ENCODE measurements at regions of chr13 and their contacts with region 1.

Region 1: GRCh38 chr13:30465585-30466357 is at the start of gene HMGB1:
- DNase-seq: peak; percentile 99 to 100 (median 100)
- H3K4me3 ChIP-seq: peak within 1 kb of the TSS; percentile 50 to 94 (median 79)
- H3K27ac ChIP-seq: peak within 1 kb of the TSS; percentile 61 to 100 (median 98)
- H3K27me3 ChIP-seq: no peaks in the 10 kb centered on the region
- CTCF ChIP-seq: peak in 10 of 56 donors; percentile 8 to 34 (median 20)
- total RNA-seq, gene HMGB1: 153 to 327 (median 228) TPM

Region 2: GRCh38 chr13:29428310-29429181 is 1037.2 kb before region 1 on chr13:
- intact Hi-C with region 1: no loop called
- DNase-seq: peak in 7 of 10 donors; percentile 48 to 63 (median 50)
- H3K4me3 ChIP-seq: peak overlapping the region; percentile 9 to 75 (median 54)
- H3K27ac ChIP-seq: peak overlapping the region in 42 of 59 donors; percentile 4 to 74 (median 57)
- H3K27me3 ChIP-seq: peaks cover 0 to 20% (median 0%) of the 10 kb centered on the region in 45 donors
- CTCF ChIP-seq: peak in 2 of 56 donors; percentile 5

Region 3: GRCh38 chr13:29850224-29850898 is 615.4 kb before region 1 on chr13 and contains the start of gene UBL3:
- intact Hi-C with region 1: loop called in 1 of 2 experiments (anchors 10 kb)
- DNase-seq: peak; percentile 92 to 98 (median 96)
- H3K4me3 ChIP-seq: peak within 1 kb of the TSS; percentile 57 to 97 (median 88)
- H3K27ac ChIP-seq: peak within 1 kb of the TSS; percentile 93 to 100 (median 99)
- H3K27me3 ChIP-seq: no peaks in the 10 kb centered on the region
- CTCF ChIP-seq: peak in 8 of 56 donors; percentile 6 to 26 (median 12)
- total RNA-seq, gene UBL3: 53.7 to 110 (median 72.5) TPM

Region 4: DNA sequence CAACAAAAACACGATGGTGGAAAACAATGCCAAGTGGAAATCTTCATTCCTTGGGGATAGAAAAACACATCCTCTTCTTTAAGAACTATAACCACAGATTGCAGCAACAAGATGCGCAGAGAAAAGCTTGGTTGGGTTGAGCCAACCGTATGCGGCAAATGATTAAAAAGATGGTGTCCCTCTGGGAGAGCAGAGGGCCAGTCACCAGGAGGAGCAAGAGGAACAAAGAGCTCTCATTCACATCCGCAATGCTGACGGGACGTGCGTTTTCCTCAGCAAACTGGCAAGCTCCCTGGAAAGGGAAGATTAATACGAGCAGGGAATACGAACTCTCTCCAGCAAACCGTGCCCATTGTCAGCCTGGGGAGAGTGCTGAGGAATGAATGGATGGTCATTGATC is 300.0 kb before region 1 on chr13:
- intact Hi-C with region 1: no loop called
- DNase-seq: peak in 2 of 10 donors; percentile 53
- H3K4me3 ChIP-seq: peak overlapping the region in 42 of 59 donors; percentile 2 to 54 (median 28)
- H3K27ac ChIP-seq: peak overlapping the region in 1 of 59 donors; percentile 54
- H3K27me3 ChIP-seq: no peaks in the 10 kb centered on the region
- CTCF ChIP-seq: peak in 13 of 56 donors; percentile 7 to 54 (median 25)

Region 5: DNA sequence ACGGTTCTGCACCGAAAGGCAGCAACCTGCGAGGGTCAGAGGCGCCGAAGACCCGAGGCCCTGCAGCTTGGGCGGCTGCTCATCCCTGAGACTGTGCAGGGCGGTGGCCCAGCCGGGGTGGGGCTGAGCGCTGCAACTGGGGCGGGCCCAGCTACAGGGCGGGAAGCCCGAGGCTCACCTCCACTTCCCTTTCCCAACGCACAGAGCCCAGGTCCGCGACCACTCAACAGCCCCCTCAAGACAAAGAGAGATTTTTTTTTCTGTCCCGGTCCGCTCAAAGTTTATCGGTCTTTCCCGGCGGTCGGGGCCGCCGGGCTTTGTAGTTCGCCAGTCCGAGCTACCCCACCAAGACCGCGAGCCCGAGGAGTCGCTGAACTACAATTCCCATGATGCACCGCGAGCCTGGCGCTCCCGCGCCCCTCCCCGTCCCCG is 159.0 kb before region 1 on chr13:
- intact Hi-C with region 1: loop called (anchors 5 kb)
- DNase-seq: peak; percentile 88 to 97 (median 93)
- H3K4me3 ChIP-seq: peak overlapping the region; percentile 74 to 99 (median 92)
- H3K27ac ChIP-seq: peak overlapping the region; percentile 41 to 97 (median 93)
- H3K27me3 ChIP-seq: no peaks in the 10 kb centered on the region
- CTCF ChIP-seq: peak in 17 of 56 donors; percentile 3 to 40 (median 15)

Region 6: GRCh38 chr13:30394751-30395191 is 71.0 kb before region 1 on chr13:
- intact Hi-C with region 1: no loop called
- DNase-seq: no peak
- H3K4me3 ChIP-seq: peak overlapping the region; percentile 40 to 93 (median 69)
- H3K27ac ChIP-seq: peak overlapping the region in 57 of 59 donors; percentile 43 to 93 (median 79)
- H3K27me3 ChIP-seq: no peaks in the 10 kb centered on the region
- CTCF ChIP-seq: no peak

Region 7: GRCh38 chr13:30572859-30573275 is 107.1 kb after region 1 on chr13:
- intact Hi-C with region 1: loop called in 1 of 2 experiments (anchors 5 kb)
- DNase-seq: no peak
- H3K4me3 ChIP-seq: peak overlapping the region in 58 of 59 donors; percentile 5 to 67 (median 49)
- H3K27ac ChIP-seq: peak overlapping the region in 31 of 59 donors; percentile 0 to 77 (median 32)
- H3K27me3 ChIP-seq: no peaks in the 10 kb centered on the region
- CTCF ChIP-seq: peak in 39 of 56 donors; percentile 15 to 70 (median 38)

Region 8: DNA sequence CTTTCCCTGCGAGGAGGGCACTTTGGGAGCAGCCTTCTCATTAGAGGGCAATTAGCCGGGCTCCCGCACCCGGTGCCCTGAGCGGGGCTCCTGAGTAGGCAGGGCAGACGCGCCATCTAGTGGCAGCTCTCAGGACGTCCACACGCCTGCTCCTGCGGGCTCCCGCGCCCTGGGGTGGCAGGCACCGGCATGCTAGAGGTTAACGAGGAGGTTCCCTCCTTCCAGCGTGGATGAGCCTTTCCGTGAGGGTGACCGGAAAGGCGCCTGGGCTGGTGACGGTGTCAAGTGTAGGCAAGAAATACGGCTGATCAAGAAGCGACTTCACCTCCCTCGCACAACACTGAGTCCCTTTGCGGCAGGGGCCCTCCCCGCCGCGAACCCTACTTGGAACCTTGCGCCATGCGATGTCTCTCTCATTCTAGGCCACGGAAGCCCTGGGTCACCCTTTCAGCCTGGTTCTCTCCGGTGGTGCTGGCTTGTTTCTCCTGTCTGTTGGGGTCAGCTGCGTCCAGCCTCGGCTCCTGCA is 337.2 kb after region 1 on chr13:
- intact Hi-C with region 1: loop called (anchors 5 kb)
- DNase-seq: peak; percentile 79 to 95 (median 90)
- H3K4me3 ChIP-seq: peak overlapping the region in 58 of 59 donors; percentile 20 to 71 (median 53)
- H3K27ac ChIP-seq: peak overlapping the region in 31 of 59 donors; percentile 5 to 78 (median 40)
- H3K27me3 ChIP-seq: no peaks in the 10 kb centered on the region
- CTCF ChIP-seq: peak; percentile 47 to 99 (median 96)